Heart right ventricle (tissue), 16 donors: ENCODE measurements at regions of chr7 and their contacts with region 1.

Region 1: DNA sequence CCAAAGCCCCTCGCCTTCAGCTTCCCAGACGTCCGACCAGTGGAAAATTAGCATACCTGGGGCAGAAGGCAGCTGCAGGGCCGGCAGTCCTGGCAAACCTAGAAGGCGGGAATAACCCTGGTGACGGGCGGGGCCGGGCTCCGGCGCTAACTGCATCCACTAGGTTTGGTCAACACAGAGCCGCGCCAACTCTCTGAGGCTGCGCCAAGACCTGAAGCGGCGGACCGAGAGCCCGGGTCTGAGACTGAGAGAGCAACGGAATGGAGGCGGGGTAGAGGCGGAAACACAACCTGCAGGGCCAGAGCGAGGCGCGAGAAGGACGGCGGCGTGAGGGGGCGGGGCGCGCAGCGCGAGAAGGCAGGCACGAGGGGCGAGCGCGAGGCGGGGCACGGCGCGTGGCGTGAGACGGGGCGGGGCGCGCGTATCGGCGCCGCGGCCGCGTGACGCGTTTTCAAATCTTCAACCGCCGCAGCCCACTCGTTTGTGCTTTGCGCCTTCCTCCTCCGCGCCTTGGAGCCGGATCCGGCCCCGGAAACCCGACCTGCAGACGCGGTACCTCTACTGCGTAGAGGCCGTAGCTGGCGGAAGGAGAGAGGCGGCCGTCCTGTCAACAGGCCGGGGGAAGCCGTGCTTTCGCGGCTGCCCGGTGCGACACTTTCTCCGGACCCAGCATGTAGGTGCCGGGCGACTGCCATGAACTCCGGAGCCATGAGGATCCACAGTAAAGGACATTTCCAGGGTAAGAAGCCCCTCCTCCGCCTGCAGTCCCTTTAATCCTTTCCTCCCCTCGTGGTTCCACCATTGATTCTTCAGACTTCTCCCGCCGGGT is at the starts of genes DBF4 and SLC25A40:
- DNase-seq: peak; percentile 95 to 96
- ATAC-seq: peak; percentile 97 to 100 (median 98)
- H3K4me3 ChIP-seq: peak within 1 kb of the TSS; percentile 64 to 93 (median 84)
- H3K27ac ChIP-seq: peak within 1 kb of the TSS; percentile 76 to 93 (median 90)
- H3K4me1 ChIP-seq: peaks cover 0 to 52% (median 26%) of the 10 kb centered on the region in 9 donors
- H3K27me3 ChIP-seq: no peaks in the 10 kb centered on the region
- CTCF ChIP-seq: no peak
- total RNA-seq, gene DBF4: 1.2 to 5.2 (median 1.9) TPM
- total RNA-seq, gene SLC25A40: 15.9 to 29.6 (median 22.6) TPM

Region 2: GRCh38 chr7:87345166-87345927 is 530.9 kb before region 1 on chr7 and contains the start of gene CROT:
- intact Hi-C with region 1: loop called in 2 of 10 experiments (anchors 10 kb)
- DNase-seq: peak; percentile 96 to 97
- ATAC-seq: peak; percentile 100
- H3K4me3 ChIP-seq: peak within 1 kb of the TSS; percentile 55 to 89 (median 74)
- H3K27ac ChIP-seq: peak within 1 kb of the TSS; percentile 58 to 89 (median 82)
- H3K4me1 ChIP-seq: peaks cover 0 to 35% (median 16%) of the 10 kb centered on the region in 9 donors
- H3K27me3 ChIP-seq: no peaks in the 10 kb centered on the region
- CTCF ChIP-seq: peak in 1 of 9 donors; percentile 9
- total RNA-seq, gene CROT: 4.5 to 10.6 (median 7.7) TPM

Region 3: GRCh38 chr7:87506246-87507180 is 369.7 kb before region 1 on chr7:
- intact Hi-C with region 1: loop called in 3 of 10 experiments (anchors 10 kb)
- DNase-seq: no peak
- ATAC-seq: peak in 1 of 8 donors; percentile 22
- H3K4me3 ChIP-seq: no peak overlapping the region
- H3K27ac ChIP-seq: no peak overlapping the region
- H3K4me1 ChIP-seq: peaks cover 0 to 9% (median 0%) of the 10 kb centered on the region in 9 donors
- H3K27me3 ChIP-seq: no peaks in the 10 kb centered on the region
- CTCF ChIP-seq: peak in 8 of 9 donors; percentile 23 to 67 (median 52)

Region 4: DNA sequence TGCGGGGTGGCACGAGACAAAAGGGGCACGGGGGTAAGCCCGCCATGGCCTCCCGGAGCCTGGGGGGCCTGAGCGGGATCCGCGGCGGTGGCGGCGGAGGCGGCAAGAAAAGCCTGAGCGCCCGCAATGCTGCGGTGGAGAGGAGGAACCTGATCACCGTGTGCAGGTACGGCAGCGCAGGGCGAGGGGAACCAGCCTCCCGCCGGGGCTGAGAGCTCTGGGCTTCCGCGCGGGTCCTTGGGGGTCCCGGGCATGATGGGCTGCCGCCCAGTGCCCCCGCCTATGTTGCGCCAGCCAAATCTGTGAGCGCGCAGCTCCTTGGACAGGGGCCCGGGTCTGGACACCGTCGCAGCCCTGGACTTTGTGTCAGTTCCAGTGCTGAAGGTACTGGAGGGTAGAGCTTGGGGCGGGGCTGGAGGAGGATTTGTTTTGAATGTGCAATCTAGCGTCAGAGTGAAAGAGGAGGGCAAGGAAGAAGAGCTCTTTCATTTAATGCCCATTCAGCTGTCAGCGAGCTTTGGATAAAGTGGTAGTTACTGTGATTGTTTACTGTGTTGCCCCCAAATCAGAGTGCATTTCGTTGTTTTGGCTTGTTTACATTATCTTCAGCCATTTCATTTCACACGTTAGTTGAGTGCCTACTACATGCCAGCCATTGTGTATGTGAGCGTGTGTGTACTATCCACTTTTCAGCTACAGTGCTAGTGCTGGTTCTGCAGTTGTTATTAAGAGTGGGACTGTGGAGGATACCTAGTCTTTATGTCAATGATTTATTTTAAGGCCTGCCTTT is 247.3 kb before region 1 on chr7:
- intact Hi-C with region 1: loop called in 1 of 10 experiments (anchors 5 kb)
- DNase-seq: peak; percentile 4 to 13
- ATAC-seq: peak in 6 of 8 donors; percentile 11 to 64 (median 27)
- H3K4me3 ChIP-seq: peak overlapping the region; percentile 50 to 69 (median 60)
- H3K27ac ChIP-seq: peak overlapping the region in 2 of 10 donors; percentile 11 to 41
- H3K4me1 ChIP-seq: peaks cover 0 to 17% (median 9%) of the 10 kb centered on the region in 9 donors
- H3K27me3 ChIP-seq: peaks cover 0 to 29% (median 0%) of the 10 kb centered on the region in 7 donors
- CTCF ChIP-seq: no peak

Region 5: GRCh38 chr7:87797798-87798403 is 78.4 kb before region 1 on chr7:
- intact Hi-C with region 1: loop called in 1 of 10 experiments (anchors 2 kb)
- DNase-seq: no peak
- ATAC-seq: peak in 3 of 8 donors; percentile 28 to 41 (median 41)
- H3K4me3 ChIP-seq: no peak overlapping the region
- H3K27ac ChIP-seq: no peak overlapping the region
- H3K4me1 ChIP-seq: no peaks in the 10 kb centered on the region
- H3K27me3 ChIP-seq: no peaks in the 10 kb centered on the region
- CTCF ChIP-seq: peak; percentile 29 to 73 (median 62)

Region 6: GRCh38 chr7:88101769-88102168 is 225.5 kb after region 1 on chr7:
- intact Hi-C with region 1: loop called in 1 of 10 experiments (anchors 10 kb)
- DNase-seq: no peak
- ATAC-seq: no peak
- H3K4me3 ChIP-seq: no peak overlapping the region
- H3K27ac ChIP-seq: no peak overlapping the region
- H3K4me1 ChIP-seq: peaks cover 0 to 16% (median 0%) of the 10 kb centered on the region in 9 donors
- H3K27me3 ChIP-seq: no peaks in the 10 kb centered on the region
- CTCF ChIP-seq: no peak